Posterior vena cava (tissue), 2 donors: ENCODE measurements at regions of chr12 and their contacts with region 1.

Region 1: DNA sequence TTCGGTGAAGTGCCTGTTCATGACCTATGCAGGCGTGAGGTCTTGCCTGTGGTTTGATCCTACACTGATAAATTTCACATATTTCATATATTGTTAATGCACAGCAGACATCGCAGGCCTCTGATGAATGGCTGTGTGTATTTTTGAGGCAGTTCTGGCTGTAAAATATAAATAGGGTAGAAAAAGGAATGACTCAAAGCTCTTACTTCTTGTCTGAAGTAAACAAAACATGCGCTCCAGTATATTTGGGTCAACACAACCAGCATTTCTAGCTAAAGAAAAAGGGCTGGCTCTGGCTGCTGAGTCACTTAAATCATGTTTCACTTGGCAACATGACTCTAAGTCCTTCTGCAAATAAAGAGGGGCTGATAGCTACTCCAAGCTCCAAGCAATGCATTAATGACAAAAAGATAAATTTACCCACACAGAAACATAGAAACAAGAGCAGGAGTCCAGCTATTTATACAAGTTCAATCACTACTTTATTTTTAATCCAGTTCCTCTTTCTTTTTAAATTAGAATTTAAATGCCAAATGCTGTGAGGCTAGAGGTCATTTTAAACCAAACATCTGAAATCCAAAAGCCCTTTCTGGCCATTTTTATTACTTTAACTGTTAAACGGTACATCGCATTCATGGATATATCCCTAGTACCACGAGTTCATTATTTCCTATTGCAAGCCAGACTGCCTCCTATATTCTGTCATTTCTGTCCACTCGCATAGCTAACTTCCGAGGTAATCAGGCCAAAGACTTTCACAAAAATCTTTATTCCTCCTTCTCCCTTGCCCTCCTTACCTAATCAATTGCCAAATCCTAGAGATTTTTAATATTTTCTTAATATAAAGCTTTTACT is 54.3 kb upstream of the TMCC3 start:
- DNase-seq: no peak

Region 2: GRCh38 chr12:94149119-94149780 is 555.4 kb before region 1 on chr12:
- intact Hi-C with region 1: loop called in 1 of 2 experiments (anchors 5 kb)
- DNase-seq: peak; percentile 86

Region 3: DNA sequence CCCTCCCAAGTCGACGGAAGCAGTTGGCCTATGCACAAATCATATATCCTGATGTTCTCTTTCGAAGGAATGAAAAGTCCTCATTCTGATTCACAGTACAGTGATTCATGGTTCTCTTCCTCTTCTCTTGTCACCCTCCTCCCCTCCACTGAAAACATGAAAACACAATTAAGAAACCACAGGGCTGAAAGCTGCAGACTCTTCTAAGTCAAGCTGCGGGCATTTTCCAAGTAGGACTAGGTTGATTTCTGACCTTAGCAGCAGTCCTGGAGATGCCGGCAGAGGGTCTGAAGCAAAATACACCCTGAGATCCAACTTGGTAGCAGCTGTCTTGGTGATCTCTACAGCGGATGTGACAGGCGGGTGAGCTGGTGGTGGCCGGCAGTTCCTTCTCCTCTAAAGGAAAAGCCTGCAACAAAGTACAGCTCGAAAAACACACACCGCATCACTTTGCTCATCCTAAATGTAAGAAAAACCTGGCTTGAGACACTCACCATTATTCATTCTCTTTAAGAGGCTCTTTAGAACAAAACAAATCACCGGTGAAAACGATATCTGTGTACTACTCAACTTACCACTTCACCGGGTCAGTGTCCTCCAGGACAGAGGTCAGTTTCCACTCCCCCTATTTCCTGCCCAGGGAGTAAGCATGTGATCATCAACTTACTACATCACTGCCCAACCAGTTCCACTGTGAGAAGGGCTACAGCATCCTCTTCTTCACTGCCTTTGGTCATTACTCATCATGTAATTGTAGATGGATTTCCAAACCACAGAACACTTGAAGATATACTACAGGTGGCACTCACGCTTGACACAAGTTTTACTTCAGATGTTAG is 60.3 kb before region 1 on chr12:
- intact Hi-C with region 1: no loop called
- DNase-seq: no peak

Region 4: GRCh38 chr12:95164656-95165055 is 460.0 kb after region 1 on chr12:
- intact Hi-C with region 1: loop called in 1 of 2 experiments (anchors 5 kb)
- DNase-seq: no peak